Panc1 (cell line): ENCODE measurements at regions of chr10 and their contacts with region 1.

Region 1: GRCh38 chr10:30186371-30186875 is 127.0 kb upstream of the JCAD start:
- DNase-seq: no peak
- ATAC-seq: peak; percentile 71
- H3K4me3 ChIP-seq: peak overlapping the region; percentile 28 to 55
- H3K27ac ChIP-seq: peak overlapping the region; percentile 91
- H3K4me1 ChIP-seq: peaks cover 28% of the 10 kb centered on the region
- H3K27me3 ChIP-seq: no peaks in the 10 kb centered on the region
- CTCF ChIP-seq: peak; percentile 60

Region 2: DNA sequence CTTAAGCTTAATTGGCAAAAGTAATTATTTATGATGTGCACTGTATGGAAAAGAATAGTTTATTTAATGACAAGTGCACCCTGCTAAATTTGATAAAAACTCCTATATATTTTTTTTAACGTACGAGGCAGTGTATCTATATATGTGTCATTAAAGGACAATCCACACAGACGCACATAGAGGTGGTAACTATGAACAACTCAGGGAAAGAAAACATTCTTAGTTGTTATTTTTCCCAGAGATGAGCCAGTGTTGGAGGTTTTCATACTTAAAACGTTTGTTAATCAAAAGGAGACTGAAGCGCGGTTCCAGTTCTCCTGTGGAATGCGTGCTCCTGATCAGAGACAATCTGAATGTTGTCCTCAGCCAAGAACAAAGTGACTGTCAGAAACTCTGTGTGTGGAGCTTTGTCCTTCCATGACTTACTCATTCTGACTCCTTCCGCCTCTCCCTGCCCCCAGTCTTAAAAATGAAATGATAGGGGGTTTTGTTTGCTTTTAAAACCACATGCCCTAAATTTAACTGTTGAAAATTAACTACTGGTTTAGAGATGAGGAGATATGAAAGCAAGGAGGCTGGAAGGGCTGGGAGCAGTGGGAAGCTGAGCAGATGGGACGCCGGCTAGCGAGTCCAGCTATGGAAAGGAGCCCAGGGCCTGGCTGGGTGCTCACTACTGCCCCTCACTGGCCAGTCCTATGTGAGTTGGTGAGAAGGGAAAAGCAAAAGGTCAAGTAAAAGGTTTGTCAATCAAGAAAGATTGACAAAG is 651.2 kb before region 1 on chr10:
- CTCF ChIA-PET with region 1: interaction called, 14 read pairs
- POLR2A ChIA-PET with region 1: no interaction called
- in situ Hi-C with region 1: no loop called
- intact Hi-C with region 1: no loop called
- DNase-seq: peak; percentile 22
- ATAC-seq: peak; percentile 93
- H3K4me3 ChIP-seq: 0 out of 4 replicates have a peak overlapping the region, but pooled peaks of 1 of the 2 experiments have one; percentile 2
- H3K27ac ChIP-seq: peak overlapping the region; percentile 77
- H3K4me1 ChIP-seq: peaks cover 20% of the 10 kb centered on the region
- H3K27me3 ChIP-seq: no peaks in the 10 kb centered on the region
- CTCF ChIP-seq: peak; percentile 89

Region 3: GRCh38 chr10:30037620-30038336 is 148.6 kb before region 1 on chr10:
- CTCF ChIA-PET with region 1: no interaction called
- POLR2A ChIA-PET with region 1: interaction called, 13 read pairs
- in situ Hi-C with region 1: no loop called
- intact Hi-C with region 1: no loop called
- DNase-seq: no peak
- ATAC-seq: no peak
- H3K4me3 ChIP-seq: no peak overlapping the region
- H3K27ac ChIP-seq: no peak overlapping the region
- H3K4me1 ChIP-seq: no peaks in the 10 kb centered on the region
- H3K27me3 ChIP-seq: no peaks in the 10 kb centered on the region
- CTCF ChIP-seq: no peak

Region 4: GRCh38 chr10:30059209-30060107 is 127.0 kb before region 1 on chr10 and contains the start of gene JCAD:
- CTCF ChIA-PET with region 1: no interaction called
- POLR2A ChIA-PET with region 1: no interaction called
- in situ Hi-C with region 1: no loop called
- intact Hi-C with region 1: loop called (anchors 10 kb)
- DNase-seq: no peak
- ATAC-seq: peak; percentile 80
- H3K4me3 ChIP-seq: peak within 1 kb of the TSS; percentile 66 to 67
- H3K27ac ChIP-seq: peak within 1 kb of the TSS; percentile 92
- H3K4me1 ChIP-seq: peaks cover 22% of the 10 kb centered on the region
- H3K27me3 ChIP-seq: no peaks in the 10 kb centered on the region
- CTCF ChIP-seq: no peak
- total RNA-seq, gene JCAD: 40.7 TPM